Activated naive CD4-positive, alpha-beta T cell treated with anti-CD3 and anti-CD28 coated beads for 36 hours (primary cell): ENCODE measurements at regions of chr15 and their contacts with region 1.

Region 1: GRCh38 chr15:48810414-48811317 is at the start of gene CEP152:
- DNase-seq: peak; percentile 99
- H3K4me3 Mint-ChIP-seq: peak within 1 kb of the TSS; percentile 97
- H3K27ac Mint-ChIP-seq: peak within 1 kb of the TSS; percentile 95
- H3K4me1 Mint-ChIP-seq: peaks cover 35% of the 10 kb centered on the region
- H3K27me3 Mint-ChIP-seq: no peaks in the 10 kb centered on the region
- total RNA-seq, gene CEP152: 55.1 to 62.0 TPM

Region 2: GRCh38 chr15:48177766-48178647 is 632.7 kb before region 1 on chr15 and contains the start of gene MYEF2:
- CTCF ChIA-PET with region 1: no interaction called
- intact Hi-C with region 1: loop called (anchors 5 kb)
- DNase-seq: peak; percentile 83
- H3K4me3 Mint-ChIP-seq: peak within 1 kb of the TSS; percentile 78
- H3K27ac Mint-ChIP-seq: peak within 1 kb of the TSS; percentile 85
- H3K4me1 Mint-ChIP-seq: peaks cover 14% of the 10 kb centered on the region
- H3K27me3 Mint-ChIP-seq: peaks cover 23% of the 10 kb centered on the region
- total RNA-seq, gene MYEF2: 31.7 to 32.7 TPM

Region 3: GRCh38 chr15:48963524-48964113 is 153.0 kb after region 1 on chr15 and contains the start of gene SHC4:
- CTCF ChIA-PET with region 1: no interaction called
- intact Hi-C with region 1: loop called (anchors 1 kb)
- DNase-seq: peak; percentile 14
- H3K4me3 Mint-ChIP-seq: peak within 1 kb of the TSS; percentile 69
- H3K27ac Mint-ChIP-seq: no peak within 1 kb of the TSS
- H3K4me1 Mint-ChIP-seq: peaks cover 31% of the 10 kb centered on the region
- H3K27me3 Mint-ChIP-seq: peaks cover 52% of the 10 kb centered on the region
- total RNA-seq, gene SHC4: 0.21 to 0.25 TPM

Region 4: GRCh38 chr15:49155110-49155833 is 344.6 kb after region 1 on chr15 and contains the start of gene COPS2:
- CTCF ChIA-PET with region 1: no interaction called
- intact Hi-C with region 1: loop called (anchors 1 kb)
- DNase-seq: peak; percentile 97
- H3K4me3 Mint-ChIP-seq: peak within 1 kb of the TSS; percentile 98
- H3K27ac Mint-ChIP-seq: peak within 1 kb of the TSS; percentile 97
- H3K4me1 Mint-ChIP-seq: peaks cover 41% of the 10 kb centered on the region
- H3K27me3 Mint-ChIP-seq: no peaks in the 10 kb centered on the region
- total RNA-seq, gene COPS2: 79.7 to 86.4 TPM

Region 5: DNA sequence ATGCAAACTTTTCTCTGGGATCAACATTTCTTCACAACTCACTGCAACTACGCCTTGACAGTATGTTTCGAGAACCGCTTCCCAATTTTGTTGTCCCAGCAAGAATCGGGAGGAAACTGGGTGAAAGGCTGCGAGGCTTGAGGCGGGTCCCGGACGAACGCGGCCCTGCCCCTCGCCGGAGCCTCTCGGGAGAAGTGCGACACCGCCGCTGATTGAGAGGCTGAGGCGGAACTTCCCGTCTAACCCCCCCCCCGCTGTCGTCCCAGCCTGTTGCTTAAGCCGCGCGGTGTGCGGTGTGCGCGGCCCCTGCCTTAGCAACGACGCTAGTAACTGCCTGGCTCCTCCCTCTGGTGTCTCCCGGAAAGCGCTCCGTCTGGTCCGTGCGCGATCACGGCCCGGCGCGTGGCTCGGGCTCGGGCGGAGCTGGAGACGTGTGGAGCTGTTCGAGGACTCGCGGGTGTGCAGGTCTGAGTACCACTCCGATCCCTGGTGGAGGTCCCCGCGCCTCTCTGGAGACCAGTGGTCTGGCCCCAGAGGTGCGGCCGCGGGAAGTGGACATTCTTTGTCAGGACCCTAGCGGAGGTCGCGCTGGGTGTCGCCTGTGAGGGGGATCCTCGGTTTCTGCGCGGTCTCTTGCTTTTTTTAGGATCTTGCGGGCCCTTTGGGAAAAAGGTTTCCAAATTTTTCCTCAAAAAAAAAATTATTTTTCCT is 810.1 kb after region 1 on chr15 and contains the starts of genes DTWD1 and FAM227B:
- CTCF ChIA-PET with region 1: no interaction called
- intact Hi-C with region 1: loop called (anchors 2 kb)
- DNase-seq: peak; percentile 96
- H3K4me3 Mint-ChIP-seq: peak within 1 kb of the TSS; percentile 88
- H3K27ac Mint-ChIP-seq: peak within 1 kb of the TSS; percentile 91
- H3K4me1 Mint-ChIP-seq: peaks cover 33% of the 10 kb centered on the region
- H3K27me3 Mint-ChIP-seq: no peaks in the 10 kb centered on the region
- total RNA-seq, gene DTWD1: 18.5 to 19.4 TPM
- total RNA-seq, gene FAM227B: 2.0 to 2.8 TPM